ENCODE measurements at regions of chr11 and their contacts with region 1.

Region 1: GRCh38 chr11:76152086-76152681 is 54.1 kb downstream of the WNT11 start:
- DNase-seq: peak; percentile 94
- H3K4me3 Mint-ChIP-seq: peak overlapping the region; percentile 51
- H3K27ac Mint-ChIP-seq: no peak overlapping the region
- H3K4me1 Mint-ChIP-seq: peaks cover 18% of the 10 kb centered on the region
- H3K27me3 Mint-ChIP-seq: peaks cover 3% of the 10 kb centered on the region

Region 2: DNA sequence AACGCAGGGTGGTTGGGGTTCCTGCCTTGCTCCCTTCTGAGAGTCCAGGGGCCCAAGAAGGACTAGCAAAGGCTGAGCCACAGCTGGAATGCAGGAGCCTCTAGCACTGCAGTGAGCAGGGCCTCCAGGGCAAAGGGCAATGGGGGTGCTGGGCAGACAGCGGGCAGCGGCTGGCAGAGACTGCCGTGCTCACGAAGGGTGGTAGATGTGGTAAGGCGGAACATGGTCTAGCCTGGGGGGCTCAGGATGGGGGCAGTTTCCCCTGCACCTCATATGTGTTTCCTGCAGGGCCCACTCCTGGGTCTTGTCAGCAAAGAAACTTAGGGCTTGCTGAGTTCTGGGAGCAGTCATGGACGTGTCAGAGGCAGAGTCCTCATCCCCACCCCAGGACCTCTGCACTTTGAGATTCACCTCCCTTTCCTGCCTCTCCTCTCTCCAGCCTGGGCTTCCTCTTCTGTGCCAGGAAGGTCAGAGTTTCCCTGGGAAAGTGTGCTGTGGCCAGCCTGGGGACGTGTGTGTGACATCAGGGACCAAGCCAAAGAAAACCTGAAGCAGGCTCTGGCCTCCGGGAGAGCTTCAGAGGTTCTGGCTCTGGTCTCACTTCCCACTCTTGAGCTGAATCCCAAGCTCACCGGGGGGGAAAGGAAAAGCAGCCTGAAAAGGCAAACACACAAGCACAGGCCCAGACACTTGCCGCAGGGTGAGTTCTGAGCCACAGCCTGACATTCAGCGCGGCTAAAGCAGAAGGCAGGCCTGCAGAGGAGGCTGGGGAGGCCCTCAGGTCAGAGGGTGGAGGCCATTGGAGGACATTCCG is 430.1 kb before region 1 on chr11:
- CTCF ChIA-PET with region 1: interaction called, 4 read pairs
- POLR2A ChIA-PET with region 1: no interaction called
- intact Hi-C with region 1: loop called (anchors 1 kb)
- DNase-seq: no peak
- H3K4me3 Mint-ChIP-seq: no peak overlapping the region
- H3K27ac Mint-ChIP-seq: no peak overlapping the region
- H3K4me1 Mint-ChIP-seq: no peaks in the 10 kb centered on the region
- H3K27me3 Mint-ChIP-seq: no peaks in the 10 kb centered on the region

Region 3: DNA sequence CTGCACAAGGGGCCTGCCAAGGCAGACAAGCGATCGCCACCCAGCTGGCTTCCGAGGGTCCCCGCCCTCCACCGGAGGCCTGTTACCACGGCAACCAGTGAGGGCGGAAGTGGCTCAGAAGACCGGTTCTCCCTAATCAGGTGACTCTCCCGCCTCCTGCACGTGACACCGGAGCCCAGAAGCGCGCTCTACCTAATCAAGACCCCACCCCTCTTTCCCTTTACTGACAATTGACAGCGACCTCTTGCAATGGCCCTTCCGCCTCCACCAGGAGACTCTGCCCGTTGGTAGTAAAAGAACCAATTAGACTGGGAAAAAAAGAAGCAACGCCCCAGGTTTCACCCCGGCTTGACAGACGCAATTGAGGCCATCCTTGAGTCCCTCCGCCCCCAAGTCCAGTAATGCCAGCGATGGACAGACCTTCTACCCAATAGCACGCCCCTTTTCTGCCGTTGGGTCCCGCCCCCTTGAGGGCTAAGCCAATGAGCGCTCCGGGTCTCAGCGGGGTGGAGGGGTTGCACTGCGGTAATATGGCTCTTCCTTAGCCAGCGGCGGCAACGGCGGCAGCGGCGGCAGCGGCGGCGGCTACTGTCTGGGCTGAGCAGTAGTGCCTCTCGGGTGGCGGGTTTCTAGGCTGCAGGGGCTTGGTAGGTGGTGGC is 337.4 kb before region 1 on chr11 and contains the start of gene UVRAG:
- CTCF ChIA-PET with region 1: interaction called, 15 read pairs
- POLR2A ChIA-PET with region 1: no interaction called
- intact Hi-C with region 1: loop called (anchors 5 kb)
- DNase-seq: peak; percentile 98
- H3K4me3 Mint-ChIP-seq: peak within 1 kb of the TSS; percentile 88
- H3K27ac Mint-ChIP-seq: peak within 1 kb of the TSS; percentile 86
- H3K4me1 Mint-ChIP-seq: peaks cover 16% of the 10 kb centered on the region
- H3K27me3 Mint-ChIP-seq: no peaks in the 10 kb centered on the region
- total RNA-seq, gene UVRAG: 15.5 to 16.7 TPM

Region 4: GRCh38 chr11:75896843-75897419 is 255.3 kb before region 1 on chr11:
- CTCF ChIA-PET with region 1: interaction called, 131 read pairs
- POLR2A ChIA-PET with region 1: no interaction called
- intact Hi-C with region 1: loop called (anchors 1 kb)
- DNase-seq: no peak
- H3K4me3 Mint-ChIP-seq: no peak overlapping the region
- H3K27ac Mint-ChIP-seq: no peak overlapping the region
- H3K4me1 Mint-ChIP-seq: peaks cover 19% of the 10 kb centered on the region
- H3K27me3 Mint-ChIP-seq: no peaks in the 10 kb centered on the region

Region 5: GRCh38 chr11:76004400-76004799 is 147.8 kb before region 1 on chr11:
- CTCF ChIA-PET with region 1: no interaction called
- POLR2A ChIA-PET with region 1: no interaction called
- intact Hi-C with region 1: no loop called
- DNase-seq: no peak
- H3K4me3 Mint-ChIP-seq: no peak overlapping the region
- H3K27ac Mint-ChIP-seq: no peak overlapping the region
- H3K4me1 Mint-ChIP-seq: no peaks in the 10 kb centered on the region
- H3K27me3 Mint-ChIP-seq: no peaks in the 10 kb centered on the region

Region 6: DNA sequence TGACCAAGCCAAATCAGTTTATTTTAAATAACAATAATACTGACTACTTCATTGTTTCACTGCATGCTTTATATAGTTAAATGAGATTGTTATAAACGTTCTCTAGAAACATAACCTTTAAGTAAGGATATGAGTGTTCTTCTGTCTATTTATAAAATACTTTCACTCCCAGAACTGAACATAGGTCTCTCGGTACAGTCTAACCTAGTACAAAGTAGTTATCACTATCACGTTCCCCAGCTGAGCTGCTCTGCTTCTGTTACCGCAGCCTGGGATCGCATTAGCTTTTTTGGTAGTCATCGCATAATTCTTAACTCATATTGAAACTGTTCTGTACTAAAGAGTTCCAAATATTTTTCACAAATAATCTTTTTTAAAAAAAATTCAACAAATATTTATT is 89.5 kb before region 1 on chr11:
- CTCF ChIA-PET with region 1: no interaction called
- POLR2A ChIA-PET with region 1: no interaction called
- intact Hi-C with region 1: no loop called
- DNase-seq: no peak
- H3K4me3 Mint-ChIP-seq: no peak overlapping the region
- H3K27ac Mint-ChIP-seq: no peak overlapping the region
- H3K4me1 Mint-ChIP-seq: no peaks in the 10 kb centered on the region
- H3K27me3 Mint-ChIP-seq: no peaks in the 10 kb centered on the region

Region 7: DNA sequence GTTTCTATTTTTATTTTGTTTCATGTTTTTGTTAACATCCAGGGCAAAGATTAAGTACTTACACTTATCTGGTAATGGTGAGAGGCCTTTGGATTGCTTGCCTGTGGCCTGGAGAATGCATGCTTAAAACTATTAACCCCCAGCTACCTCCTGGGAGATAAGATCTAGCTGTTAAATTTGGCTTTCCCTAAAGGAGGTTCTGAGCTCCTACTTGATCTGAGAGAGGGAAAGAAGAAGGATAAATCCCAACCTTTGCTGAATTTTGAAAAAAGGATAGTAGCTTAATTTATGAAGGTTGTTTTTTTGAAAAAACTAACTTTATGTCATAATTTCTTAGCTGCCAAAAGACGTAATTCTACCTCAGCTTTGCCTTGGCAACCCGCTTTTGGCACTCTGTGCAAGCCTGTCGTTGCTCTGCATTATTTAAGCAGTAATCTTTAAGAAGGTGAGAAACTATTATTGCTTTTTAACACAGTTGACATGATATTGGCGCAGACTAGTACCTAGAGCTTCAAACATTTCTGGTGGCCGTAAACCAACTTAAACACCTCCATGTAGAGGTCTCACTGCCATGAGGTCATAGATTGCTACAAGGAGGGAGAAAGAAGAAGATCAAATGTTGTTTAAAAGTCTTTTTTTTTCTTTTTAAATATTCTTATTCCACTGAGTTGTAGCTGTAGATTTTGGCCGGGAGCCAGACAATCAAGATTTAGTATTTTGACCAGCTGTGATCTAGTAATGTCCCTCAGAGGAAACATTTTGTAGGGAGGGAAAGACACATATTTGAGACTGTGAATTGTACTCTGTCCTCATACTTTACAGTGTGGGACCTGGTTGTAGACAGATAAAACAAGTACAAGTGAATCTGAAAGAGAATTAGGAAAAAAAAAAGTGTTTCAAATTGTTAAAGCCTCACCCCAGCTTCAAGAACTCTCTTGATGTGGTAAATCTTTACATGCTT is 20.2 kb before region 1 on chr11:
- CTCF ChIA-PET with region 1: interaction called, 24 read pairs
- POLR2A ChIA-PET with region 1: no interaction called
- intact Hi-C with region 1: no loop called
- DNase-seq: no peak
- H3K4me3 Mint-ChIP-seq: no peak overlapping the region
- H3K27ac Mint-ChIP-seq: no peak overlapping the region
- H3K4me1 Mint-ChIP-seq: peaks cover 27% of the 10 kb centered on the region
- H3K27me3 Mint-ChIP-seq: no peaks in the 10 kb centered on the region